ENCODE measurements at regions of chr12 and their contacts with region 1.

Region 1: GRCh38 chr12:14365294-14366208 is at the start of gene ATF7IP:
- DNase-seq: peak; percentile 90 to 98 (median 96)
- H3K4me3 ChIP-seq: peak within 1 kb of the TSS; percentile 76
- H3K4me3 Mint-ChIP-seq: peak within 1 kb of the TSS; percentile 85 to 94 (median 88)
- H3K27ac ChIP-seq: peak within 1 kb of the TSS; percentile 79
- H3K27ac Mint-ChIP-seq: peak within 1 kb of the TSS; percentile 88 to 98 (median 94)
- H3K4me1 ChIP-seq: peaks cover 36% of the 10 kb centered on the region
- H3K4me1 Mint-ChIP-seq: peaks cover 38 to 57% (median 56%) of the 10 kb centered on the region in 3 donors
- H3K27me3 ChIP-seq: no peaks in the 10 kb centered on the region
- H3K27me3 Mint-ChIP-seq: peaks cover 0 to 4% of the 10 kb centered on the region in 2 donors
- total RNA-seq, gene ATF7IP: 84.4 to 94.4 TPM

Region 2: DNA sequence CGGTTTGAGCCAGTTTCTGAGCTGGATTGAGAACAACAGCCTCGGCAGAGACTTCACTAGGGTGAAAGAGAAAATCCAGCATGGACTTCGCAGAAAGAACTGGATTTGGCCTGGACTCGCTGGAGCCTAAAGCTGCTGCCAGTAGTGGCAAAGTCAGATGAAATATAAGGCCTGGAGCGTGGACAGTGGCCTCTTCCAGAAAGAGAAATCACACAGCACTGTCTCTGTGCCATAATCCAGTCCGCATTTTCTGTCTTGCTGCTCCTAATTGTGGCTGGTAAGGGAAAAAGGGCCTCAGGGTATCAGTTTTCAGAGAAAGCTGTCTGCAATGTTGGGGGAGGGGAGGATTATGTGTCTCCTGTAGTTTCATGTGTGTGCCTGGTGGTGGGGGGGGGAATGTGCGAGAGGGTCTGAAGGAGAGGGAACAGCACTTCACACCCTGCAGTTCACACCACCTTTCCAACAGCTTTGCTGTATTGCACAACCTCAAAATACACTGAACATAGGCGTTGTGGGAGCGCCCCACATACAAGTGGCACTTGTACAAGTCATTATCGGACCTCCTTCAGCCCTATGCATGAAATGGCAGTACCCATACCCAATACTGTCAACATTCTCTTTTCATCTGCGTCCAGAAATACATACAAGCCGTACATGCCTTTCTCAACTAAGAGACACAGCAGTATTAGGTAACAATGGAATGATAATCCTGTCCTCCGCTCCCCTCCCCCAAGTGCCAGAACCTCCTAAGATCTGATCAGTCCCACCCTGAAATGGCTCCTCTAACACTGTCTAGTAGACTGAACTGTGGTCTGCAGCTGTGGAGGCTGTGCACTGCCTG is 107.6 kb before region 1 on chr12:
- CTCF ChIA-PET with region 1: interaction called, 40 read pairs
- POLR2A ChIA-PET with region 1: interaction called, 33 read pairs
- DNase-seq: peak; percentile 69 to 79 (median 78)
- H3K4me3 ChIP-seq: peak overlapping the region; percentile 24
- H3K4me3 Mint-ChIP-seq: peak overlapping the region; percentile 54 to 86 (median 83)
- H3K27ac ChIP-seq: peak overlapping the region; percentile 69
- H3K27ac Mint-ChIP-seq: peak overlapping the region; percentile 81 to 98 (median 96)
- H3K4me1 ChIP-seq: peaks cover 38% of the 10 kb centered on the region
- H3K4me1 Mint-ChIP-seq: peaks cover 44 to 53% (median 49%) of the 10 kb centered on the region in 3 donors
- H3K27me3 ChIP-seq: no peaks in the 10 kb centered on the region
- H3K27me3 Mint-ChIP-seq: peaks cover 0 to 2% of the 10 kb centered on the region in 2 donors

Region 3: GRCh38 chr12:14394317-14395073 is 28.9 kb after region 1 on chr12:
- CTCF ChIA-PET with region 1: interaction called, 17 read pairs
- POLR2A ChIA-PET with region 1: interaction called, 84 read pairs
- DNase-seq: peak in 3 of 5 donors; percentile 64 to 82 (median 78)
- H3K4me3 ChIP-seq: no peak overlapping the region
- H3K4me3 Mint-ChIP-seq: peak overlapping the region; percentile 71 to 91 (median 78)
- H3K27ac ChIP-seq: peak overlapping the region; percentile 29
- H3K27ac Mint-ChIP-seq: peak overlapping the region; percentile 76 to 99 (median 96)
- H3K4me1 ChIP-seq: peaks cover 94% of the 10 kb centered on the region
- H3K4me1 Mint-ChIP-seq: peaks cover 87 to 97% (median 94%) of the 10 kb centered on the region in 3 donors
- H3K27me3 ChIP-seq: no peaks in the 10 kb centered on the region
- H3K27me3 Mint-ChIP-seq: no peaks in the 10 kb centered on the region

Region 4: DNA sequence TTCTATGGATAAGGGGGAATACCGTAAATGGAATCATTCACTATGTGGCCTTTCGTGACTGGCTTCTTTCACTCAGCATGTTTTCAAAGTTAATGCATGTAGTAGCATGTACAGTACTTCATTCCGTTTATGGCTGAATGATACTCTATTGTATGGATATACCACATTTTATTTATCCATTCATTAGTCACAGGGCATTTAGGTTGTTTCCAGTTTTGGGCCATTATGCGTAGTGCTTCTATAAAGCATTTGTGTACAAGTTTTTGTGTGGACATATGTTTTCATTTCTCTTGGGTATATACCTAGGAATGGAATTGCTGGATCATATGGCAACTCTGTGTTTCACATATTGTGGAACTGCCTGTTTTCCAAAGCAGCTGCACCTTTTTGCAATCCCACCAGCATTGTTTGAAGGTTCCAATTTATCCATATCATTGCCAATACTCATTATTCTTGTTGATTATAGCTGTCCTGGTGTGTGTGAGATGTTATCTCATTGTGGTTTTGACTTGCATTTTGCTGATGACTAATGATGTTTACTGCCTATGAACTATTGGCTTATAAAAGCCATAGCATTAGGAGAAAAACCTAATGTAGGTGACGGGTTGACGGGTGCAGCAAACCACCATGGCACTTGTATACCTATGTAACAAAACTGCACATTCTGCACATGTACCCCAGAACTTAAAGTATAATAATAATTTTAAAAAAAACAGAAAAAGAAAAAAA is 45.5 kb after region 1 on chr12:
- CTCF ChIA-PET with region 1: interaction called, 64 read pairs
- POLR2A ChIA-PET with region 1: interaction called, 33 read pairs
- DNase-seq: peak in 3 of 5 donors; percentile 30 to 73 (median 62)
- H3K4me3 ChIP-seq: peak overlapping the region; percentile 31
- H3K4me3 Mint-ChIP-seq: peak overlapping the region; percentile 15 to 75 (median 52)
- H3K27ac ChIP-seq: no peak overlapping the region
- H3K27ac Mint-ChIP-seq: peak overlapping the region; percentile 18 to 84 (median 54)
- H3K4me1 ChIP-seq: peaks cover 78% of the 10 kb centered on the region
- H3K4me1 Mint-ChIP-seq: peaks cover 71 to 88% (median 82%) of the 10 kb centered on the region in 3 donors
- H3K27me3 ChIP-seq: no peaks in the 10 kb centered on the region
- H3K27me3 Mint-ChIP-seq: no peaks in the 10 kb centered on the region

Region 5: GRCh38 chr12:14454098-14454907 is 88.8 kb after region 1 on chr12:
- CTCF ChIA-PET with region 1: interaction called, 16 read pairs
- POLR2A ChIA-PET with region 1: interaction called, 5 read pairs
- DNase-seq: peak in 2 of 5 donors; percentile 28 to 29
- H3K4me3 ChIP-seq: no peak overlapping the region
- H3K4me3 Mint-ChIP-seq: peak overlapping the region in 4 of 7 donors; percentile 13 to 61 (median 50)
- H3K27ac ChIP-seq: no peak overlapping the region
- H3K27ac Mint-ChIP-seq: peak overlapping the region; percentile 8 to 91 (median 80)
- H3K4me1 ChIP-seq: peaks cover 34% of the 10 kb centered on the region
- H3K4me1 Mint-ChIP-seq: peaks cover 57 to 73% (median 66%) of the 10 kb centered on the region in 3 donors
- H3K27me3 ChIP-seq: no peaks in the 10 kb centered on the region
- H3K27me3 Mint-ChIP-seq: no peaks in the 10 kb centered on the region